BJ (cell line): ENCODE measurements at regions of chr3 and their contacts with region 1.

Region 1: DNA sequence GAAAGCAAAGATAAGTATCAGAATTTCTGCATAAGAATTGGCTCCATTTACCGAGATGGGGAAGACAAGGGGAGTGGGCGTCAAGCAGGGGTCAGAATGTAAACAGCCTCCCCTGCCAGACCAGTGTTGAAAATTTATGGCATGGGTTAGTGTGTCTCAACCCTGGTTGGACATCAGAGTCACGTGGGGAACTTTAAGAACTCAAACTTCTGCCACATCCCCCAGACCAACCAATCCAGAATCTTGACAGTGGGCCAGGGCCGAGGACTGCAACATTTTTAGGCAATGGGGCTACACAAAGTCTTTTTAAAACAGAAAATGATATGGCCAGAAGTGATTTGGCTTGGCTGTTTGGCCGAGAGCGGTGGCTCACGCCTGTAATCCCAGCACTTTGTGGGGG is 14.3 kb upstream of the MASP1 start:
- DNase-seq: no peak
- H3K4me3 ChIP-seq: no peak overlapping the region
- H3K27me3 ChIP-seq: no peaks in the 10 kb centered on the region
- CTCF ChIP-seq: no peak

Region 2: GRCh38 chr3:187281191-187281714 is 24.6 kb before region 1 on chr3:
- CTCF ChIA-PET with region 1: interaction called, 3 read pairs
- POLR2A ChIA-PET with region 1: interaction called, 11 read pairs
- DNase-seq: peak; percentile 97
- H3K4me3 ChIP-seq: no peak overlapping the region
- H3K27me3 ChIP-seq: no peaks in the 10 kb centered on the region
- CTCF ChIP-seq: no peak

Region 3: GRCh38 chr3:187291001-187291511 is 14.8 kb before region 1 on chr3:
- CTCF ChIA-PET with region 1: interaction called, 3 read pairs
- POLR2A ChIA-PET with region 1: interaction called, 14 read pairs
- DNase-seq: peak; percentile 74
- H3K4me3 ChIP-seq: peak overlapping the region; percentile 83
- H3K27me3 ChIP-seq: no peaks in the 10 kb centered on the region
- CTCF ChIP-seq: no peak